H1 (cell line): ENCODE measurements at regions of chr3 and their contacts with region 1.

Region 1: GRCh38 chr3:9396700-9397521 is 504 bp upstream of the SETD5 start:
- DNase-seq: peak; percentile 97 to 98
- H3K4me3 ChIP-seq: peak overlapping the region; percentile 80 to 93 (median 87)
- H3K27ac ChIP-seq: peak overlapping the region; percentile 89
- H3K4me1 ChIP-seq: peaks cover 5 to 20% (median 11%) of the 10 kb centered on the region in 4 experiments; a peak in 6 of 7 replicates
- H3K27me3 ChIP-seq: no peaks in the 10 kb centered on the region
- CTCF ChIP-seq: no peak
- EP300 ChIP-seq: peak in 1 of 2 experiments; percentile 98; a peak in 2 of 3 replicates
- POLR2A ChIP-seq: peak; percentile 94 to 98
- RAD21 ChIP-seq: no peak

Region 2: DNA sequence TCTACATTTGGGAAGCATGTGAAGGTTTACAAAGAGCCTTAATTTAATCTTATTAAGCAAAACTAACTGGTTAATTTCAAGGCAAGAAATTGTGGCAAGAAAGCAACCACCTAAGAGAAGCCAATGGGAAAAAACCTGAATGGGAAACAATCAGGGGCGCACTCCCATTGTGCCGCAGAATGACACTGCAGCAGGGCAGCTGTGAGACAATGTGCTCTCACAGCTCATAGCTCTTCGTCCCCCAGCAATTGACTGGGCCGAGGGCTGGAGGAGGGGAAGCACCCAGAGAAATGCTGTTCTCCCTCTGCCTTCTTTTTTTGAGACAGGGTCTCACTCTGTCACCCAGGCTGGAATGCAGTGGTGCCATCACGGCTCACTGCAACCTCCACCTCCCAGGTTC is 340.3 kb before region 1 on chr3:
- CTCF ChIA-PET with region 1: no interaction called
- POLR2A ChIA-PET with region 1: no interaction called
- DNase-seq: no peak
- H3K4me3 ChIP-seq: no peak overlapping the region
- H3K27ac ChIP-seq: no peak overlapping the region
- H3K4me1 ChIP-seq: 0 out of 7 replicates have a peak, but pooled peaks cover 0 to 2% (median 0%) of the 10 kb centered on the region in 4 experiments
- H3K27me3 ChIP-seq: no peaks in the 10 kb centered on the region
- CTCF ChIP-seq: no peak
- EP300 ChIP-seq: no peak
- POLR2A ChIP-seq: no peak
- RAD21 ChIP-seq: no peak

Region 3: DNA sequence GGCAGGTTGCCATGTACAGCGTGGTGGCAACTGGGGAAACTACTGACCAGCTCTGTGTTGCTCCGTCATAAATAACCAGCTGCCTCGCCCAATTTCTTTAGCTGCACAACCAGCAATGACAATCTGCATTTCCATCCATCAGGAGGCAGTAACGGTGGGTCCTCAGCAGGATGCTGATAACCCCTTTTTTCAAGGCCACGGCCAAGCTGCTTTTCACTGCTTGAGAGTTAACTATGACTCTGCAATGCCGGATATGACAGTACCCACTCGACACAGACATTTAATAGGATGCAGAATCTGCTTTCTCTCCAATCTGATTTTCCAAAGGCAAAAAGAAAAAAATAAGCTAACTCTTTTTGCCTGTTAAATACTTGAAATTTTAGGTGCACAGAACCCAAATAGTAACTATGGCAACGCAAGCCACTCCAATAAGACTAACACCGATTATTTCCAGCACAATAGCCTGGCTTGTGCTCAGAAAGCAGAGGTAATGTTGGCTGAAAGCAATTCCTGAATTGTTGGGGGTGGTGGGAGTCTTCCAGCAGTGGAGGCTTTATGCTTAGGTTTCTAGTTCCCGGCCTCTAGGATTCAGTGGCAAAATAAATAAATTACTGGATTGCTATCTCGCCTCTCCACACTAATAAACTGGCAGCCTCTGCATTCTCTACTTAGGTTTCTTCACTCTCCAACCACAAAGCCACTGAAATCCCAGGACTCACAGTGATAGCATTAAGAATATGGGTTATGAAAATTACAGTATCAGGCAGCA is 116.3 kb before region 1 on chr3:
- CTCF ChIA-PET with region 1: no interaction called
- POLR2A ChIA-PET with region 1: no interaction called
- DNase-seq: no peak
- H3K4me3 ChIP-seq: no peak overlapping the region
- H3K27ac ChIP-seq: no peak overlapping the region
- H3K4me1 ChIP-seq: peaks cover 5 to 8% (median 6%) of the 10 kb centered on the region in 4 experiments
- H3K27me3 ChIP-seq: no peaks in the 10 kb centered on the region
- CTCF ChIP-seq: peak in 1 of 3 experiments; percentile 12; a peak in 1 of 4 replicates
- EP300 ChIP-seq: no peak
- POLR2A ChIP-seq: no peak
- RAD21 ChIP-seq: peak in 1 of 2 experiments; percentile 16; a peak in 1 of 4 replicates

Region 4: GRCh38 chr3:9362731-9363530 is 34.0 kb before region 1 on chr3 and contains the start of gene THUMPD3:
- CTCF ChIA-PET with region 1: no interaction called
- POLR2A ChIA-PET with region 1: interaction called, 103 read pairs
- DNase-seq: peak; percentile 84 to 92
- H3K4me3 ChIP-seq: peak within 1 kb of the TSS; percentile 52 to 82 (median 64)
- H3K27ac ChIP-seq: peak within 1 kb of the TSS; percentile 86
- H3K4me1 ChIP-seq: peaks cover 0 to 2% (median under 1%) of the 10 kb centered on the region in 4 experiments; a peak in 2 of 7 replicates
- H3K27me3 ChIP-seq: no peaks in the 10 kb centered on the region; a peak in 1 of 7 replicates
- CTCF ChIP-seq: no peak
- EP300 ChIP-seq: peak in 1 of 2 experiments; percentile 31; a peak in 1 of 3 replicates
- POLR2A ChIP-seq: peak; percentile 85 to 99
- RAD21 ChIP-seq: peak in 1 of 2 experiments; percentile 16; a peak in 2 of 4 replicates
- total RNA-seq, gene THUMPD3: 62.6 and 68.9 TPM in 2 replicates

Region 5: GRCh38 chr3:9384141-9384853 is 12.6 kb before region 1 on chr3:
- CTCF ChIA-PET with region 1: no interaction called
- POLR2A ChIA-PET with region 1: interaction called, 152 read pairs
- DNase-seq: no peak
- H3K4me3 ChIP-seq: no peak overlapping the region
- H3K27ac ChIP-seq: no peak overlapping the region
- H3K4me1 ChIP-seq: no peaks in the 10 kb centered on the region
- H3K27me3 ChIP-seq: no peaks in the 10 kb centered on the region
- CTCF ChIP-seq: no peak
- EP300 ChIP-seq: no peak
- POLR2A ChIP-seq: peak in 1 of 2 experiments; percentile 24; a peak in 1 of 3 replicates
- RAD21 ChIP-seq: no peak

Region 6: GRCh38 chr3:9422712-9423424 is 26.0 kb after region 1 on chr3:
- CTCF ChIA-PET with region 1: interaction called, 43 read pairs
- POLR2A ChIA-PET with region 1: interaction called, 300 read pairs
- DNase-seq: no peak
- H3K4me3 ChIP-seq: peak overlapping the region in 1 of 4 experiments; percentile 5; a peak in 1 of 8 replicates
- H3K27ac ChIP-seq: peak overlapping the region; percentile 76
- H3K4me1 ChIP-seq: peaks cover 3 to 7% (median 5%) of the 10 kb centered on the region in 4 experiments; a peak in 5 of 7 replicates
- H3K27me3 ChIP-seq: no peaks in the 10 kb centered on the region
- CTCF ChIP-seq: peak in 2 of 3 experiments; percentile 26 to 62; a peak in 2 of 4 replicates
- EP300 ChIP-seq: no peak
- POLR2A ChIP-seq: no peak
- RAD21 ChIP-seq: peak; percentile 69 to 71

Region 7: DNA sequence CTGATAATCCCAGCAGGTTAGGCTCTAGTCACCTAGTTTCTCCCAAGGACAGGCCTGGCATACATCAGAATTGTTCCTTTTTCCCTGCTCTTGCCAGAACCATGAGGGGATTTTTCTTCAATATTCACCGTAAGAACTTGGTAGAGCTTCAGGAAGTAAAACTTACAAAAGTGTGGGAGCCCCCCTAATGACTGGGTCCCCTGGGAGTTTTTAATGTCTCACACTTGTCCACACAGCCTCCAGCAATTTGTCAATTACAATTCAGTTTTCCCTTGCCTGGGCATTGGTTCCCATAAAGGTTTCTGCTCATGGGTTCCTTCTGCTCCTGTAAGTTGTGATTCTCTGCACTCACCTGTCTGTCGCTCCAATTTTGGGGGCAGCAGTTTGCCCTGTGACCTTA is 128.2 kb after region 1 on chr3:
- CTCF ChIA-PET with region 1: no interaction called
- POLR2A ChIA-PET with region 1: no interaction called
- DNase-seq: no peak
- H3K4me3 ChIP-seq: no peak overlapping the region
- H3K27ac ChIP-seq: no peak overlapping the region
- H3K4me1 ChIP-seq: no peaks in the 10 kb centered on the region
- H3K27me3 ChIP-seq: no peaks in the 10 kb centered on the region
- CTCF ChIP-seq: no peak
- EP300 ChIP-seq: no peak
- POLR2A ChIP-seq: no peak
- RAD21 ChIP-seq: no peak

Region 8: DNA sequence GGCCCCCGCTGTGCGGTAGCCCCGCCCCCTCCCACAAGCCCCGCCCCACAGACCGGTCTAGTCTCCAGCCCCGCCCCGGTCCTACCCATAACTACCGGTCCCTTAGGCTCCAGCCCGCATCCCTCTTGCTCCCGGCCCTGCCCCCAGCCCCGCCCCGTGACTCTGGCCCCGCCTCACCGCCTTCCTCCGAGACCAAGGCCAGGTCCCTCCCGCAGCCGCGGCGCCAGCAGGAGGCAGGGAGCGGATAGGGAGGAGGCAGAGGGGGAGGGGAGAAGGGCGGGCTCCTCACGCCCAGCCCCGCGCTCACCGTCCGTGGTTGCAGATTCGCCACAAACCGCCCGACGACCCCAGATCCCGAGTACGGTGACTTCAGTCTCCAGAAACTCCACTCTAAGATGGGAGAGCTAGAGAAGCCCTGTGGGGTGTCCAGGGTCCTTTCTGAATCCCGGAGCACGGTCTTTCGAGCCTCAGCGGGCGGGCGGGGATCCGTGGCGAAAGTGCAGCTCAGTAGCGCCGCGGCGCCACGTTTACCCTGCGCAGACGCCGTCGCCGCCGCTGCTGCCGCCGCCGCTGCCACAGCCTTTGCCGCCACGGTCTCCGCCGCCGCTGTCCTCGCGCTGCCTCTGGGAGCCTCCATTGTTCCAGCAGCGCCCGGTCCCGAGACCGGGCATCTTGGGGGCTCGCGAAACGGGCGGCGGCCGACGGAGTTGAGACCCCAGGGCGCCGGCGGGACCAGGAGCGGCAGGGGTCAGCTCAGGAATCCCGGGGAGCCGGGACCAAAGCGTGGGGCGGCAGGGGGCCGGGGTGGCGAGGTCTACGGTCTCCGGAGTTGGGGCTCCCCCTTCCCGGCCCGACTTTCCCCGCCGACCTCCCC is 334.5 kb after region 1 on chr3 and contains the start of gene BRPF1:
- CTCF ChIA-PET with region 1: no interaction called
- POLR2A ChIA-PET with region 1: interaction called, 13 read pairs
- DNase-seq: peak; percentile 96 to 97
- H3K4me3 ChIP-seq: peak within 1 kb of the TSS; percentile 87 to 94 (median 90)
- H3K27ac ChIP-seq: peak within 1 kb of the TSS; percentile 100
- H3K4me1 ChIP-seq: peaks cover 0 to 8% (median 6%) of the 10 kb centered on the region in 4 experiments; a peak in 6 of 7 replicates
- H3K27me3 ChIP-seq: no peaks in the 10 kb centered on the region
- CTCF ChIP-seq: no peak
- EP300 ChIP-seq: peak in 1 of 2 experiments; percentile 94; a peak in 2 of 3 replicates
- POLR2A ChIP-seq: peak in 1 of 2 experiments; percentile 76; a peak in 2 of 3 replicates
- RAD21 ChIP-seq: no peak
- total RNA-seq, gene BRPF1: 21.7 and 27.7 TPM in 2 replicates